ENCODE measurements at regions of chr4 and their contacts with region 1.

Region 1: GRCh38 chr4:109424093-109424841 is 9.3 kb upstream of the SEC24B start:
- DNase-seq: no peak
- H3K4me3 ChIP-seq: no peak overlapping the region
- H3K4me1 ChIP-seq: no peaks in the 10 kb centered on the region
- H3K27me3 ChIP-seq: no peaks in the 10 kb centered on the region

Region 2: DNA sequence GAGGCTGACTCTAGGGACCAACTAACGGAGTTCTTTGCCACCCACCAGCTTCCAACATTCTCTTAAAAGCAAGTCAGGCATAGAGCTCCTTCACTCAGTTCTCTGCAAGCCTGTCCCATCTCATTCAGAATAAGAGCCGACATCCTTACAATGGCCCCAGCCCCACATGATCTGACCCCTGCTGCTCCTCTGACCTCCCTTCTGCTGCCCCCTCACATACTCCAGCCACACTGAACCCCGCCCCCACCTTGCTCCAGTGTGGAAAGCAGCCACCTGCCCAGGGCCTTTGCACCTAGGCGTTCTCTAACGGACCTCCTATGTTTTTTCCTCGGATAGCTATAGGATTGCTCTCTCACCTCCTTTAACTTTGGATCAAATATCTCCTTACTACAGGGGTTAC is 518.3 kb before region 1 on chr4:
- in situ Hi-C with region 1: no loop called
- DNase-seq: no peak
- H3K4me3 ChIP-seq: no peak overlapping the region
- H3K4me1 ChIP-seq: peaks cover 10% of the 10 kb centered on the region
- H3K27me3 ChIP-seq: no peaks in the 10 kb centered on the region

Region 3: DNA sequence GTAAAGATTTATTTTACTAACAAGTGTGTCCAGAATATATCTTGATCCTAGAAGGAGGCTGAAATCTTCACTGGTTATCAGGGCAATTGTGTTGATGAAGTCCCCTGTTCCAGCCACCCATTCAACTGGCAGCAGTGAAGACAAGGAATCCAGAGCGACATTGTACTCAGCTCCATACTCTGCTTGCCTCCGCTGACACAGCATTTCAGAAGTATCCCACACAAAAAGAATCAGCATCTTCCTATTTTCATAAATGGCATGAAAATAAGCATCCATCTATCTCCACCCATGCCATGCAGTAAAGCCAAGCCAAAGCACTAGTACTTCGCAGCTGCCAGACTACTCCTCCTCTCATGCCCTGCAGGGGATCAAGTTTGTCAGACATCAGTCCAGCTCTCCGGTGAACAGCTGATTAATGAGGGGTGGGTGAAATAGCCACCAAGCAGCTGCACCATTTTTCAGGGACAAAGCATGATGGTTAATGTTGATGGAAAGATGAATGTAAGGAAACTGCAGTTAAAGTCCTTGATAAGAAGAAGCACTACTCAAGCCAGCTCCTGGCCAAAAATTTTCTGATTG is 175.9 kb before region 1 on chr4:
- in situ Hi-C with region 1: no loop called
- DNase-seq: no peak
- H3K4me3 ChIP-seq: no peak overlapping the region
- H3K4me1 ChIP-seq: no peaks in the 10 kb centered on the region
- H3K27me3 ChIP-seq: no peaks in the 10 kb centered on the region

Region 4: DNA sequence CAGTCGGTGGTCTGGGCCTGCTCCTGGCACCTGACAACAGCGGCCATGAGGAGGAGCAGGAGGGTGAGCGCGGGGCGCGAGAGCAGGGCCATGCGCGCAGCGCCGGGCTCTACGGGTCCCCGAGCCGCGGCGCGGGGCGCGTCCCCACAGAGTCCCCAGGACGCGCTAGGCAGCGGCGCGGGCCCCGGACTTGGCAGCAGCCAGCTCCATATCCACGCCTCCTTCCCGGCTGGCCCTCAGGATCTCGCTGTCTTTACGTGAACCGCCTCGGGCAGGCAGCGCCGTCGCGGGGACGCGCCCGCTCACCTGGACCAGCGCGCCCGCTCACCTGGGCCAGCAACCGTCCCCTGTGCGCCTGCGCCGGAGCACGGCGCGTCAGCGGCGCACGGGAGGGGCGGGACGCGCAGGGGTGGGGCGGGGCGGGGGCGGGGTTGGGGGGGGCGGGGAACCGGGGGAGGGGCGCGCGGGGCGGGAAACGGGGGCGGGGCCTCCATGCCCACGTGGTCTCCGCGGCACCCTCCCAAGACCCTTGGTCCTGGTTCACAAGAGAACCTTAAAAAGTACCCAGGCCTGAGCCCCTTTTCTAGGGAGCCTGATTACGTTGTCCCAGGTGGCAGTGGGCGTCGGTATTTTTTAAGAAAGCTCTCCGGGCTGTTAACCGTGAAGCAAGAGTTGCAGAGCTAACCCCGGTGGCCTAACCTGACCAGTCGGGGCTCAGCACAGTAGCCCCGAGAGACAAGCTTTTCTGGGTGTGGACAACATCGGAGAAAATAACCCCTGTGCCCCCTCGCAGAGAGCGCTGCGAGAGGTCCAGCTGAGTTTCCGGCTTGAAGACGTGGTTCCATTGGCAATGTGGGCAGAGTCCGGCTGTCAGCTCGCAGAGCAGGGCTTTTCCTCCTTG is 305.7 kb after region 1 on chr4 and contains the start of gene PLA2G12A:
- in situ Hi-C with region 1: no loop called
- DNase-seq: peak; percentile 41 to 69
- H3K4me3 ChIP-seq: peak within 1 kb of the TSS; percentile 73
- H3K4me1 ChIP-seq: peaks cover 16% of the 10 kb centered on the region
- H3K27me3 ChIP-seq: no peaks in the 10 kb centered on the region

Region 5: DNA sequence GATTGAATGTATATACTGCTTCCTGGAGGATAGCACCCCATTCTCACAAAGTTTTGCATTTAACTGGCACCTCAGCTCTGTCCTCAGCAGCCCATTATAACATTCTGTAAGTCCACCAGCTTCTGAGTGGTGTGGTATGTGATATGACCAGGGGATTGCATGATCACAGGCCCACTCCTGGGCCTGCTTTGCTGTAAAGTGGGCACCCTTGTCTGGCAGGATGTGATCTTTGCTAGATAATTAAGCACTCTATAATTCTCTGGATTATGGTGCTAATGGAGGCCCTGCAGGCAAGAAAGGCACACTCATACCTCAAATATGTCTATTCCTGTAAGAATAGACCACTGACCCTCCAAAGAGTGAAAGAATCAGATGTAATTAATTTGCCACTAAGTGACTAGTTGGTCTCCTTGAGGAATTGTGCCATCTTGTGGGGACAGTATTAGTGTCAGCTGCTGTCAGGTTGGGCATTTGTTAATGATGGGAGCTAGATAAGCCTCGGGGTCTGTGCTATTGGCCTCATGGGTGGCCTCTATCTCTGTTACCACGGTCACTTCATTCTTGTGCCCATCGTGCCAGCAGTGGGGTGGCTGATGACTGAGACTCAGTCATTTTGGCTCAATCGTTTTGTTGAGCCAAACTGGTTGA is 379.8 kb after region 1 on chr4:
- in situ Hi-C with region 1: loop called (anchors 10 kb)
- DNase-seq: peak; percentile 24 to 42
- H3K4me3 ChIP-seq: no peak overlapping the region
- H3K4me1 ChIP-seq: peaks cover 3% of the 10 kb centered on the region; the same call in 1 of the 2 replicates
- H3K27me3 ChIP-seq: no peaks in the 10 kb centered on the region

Region 6: DNA sequence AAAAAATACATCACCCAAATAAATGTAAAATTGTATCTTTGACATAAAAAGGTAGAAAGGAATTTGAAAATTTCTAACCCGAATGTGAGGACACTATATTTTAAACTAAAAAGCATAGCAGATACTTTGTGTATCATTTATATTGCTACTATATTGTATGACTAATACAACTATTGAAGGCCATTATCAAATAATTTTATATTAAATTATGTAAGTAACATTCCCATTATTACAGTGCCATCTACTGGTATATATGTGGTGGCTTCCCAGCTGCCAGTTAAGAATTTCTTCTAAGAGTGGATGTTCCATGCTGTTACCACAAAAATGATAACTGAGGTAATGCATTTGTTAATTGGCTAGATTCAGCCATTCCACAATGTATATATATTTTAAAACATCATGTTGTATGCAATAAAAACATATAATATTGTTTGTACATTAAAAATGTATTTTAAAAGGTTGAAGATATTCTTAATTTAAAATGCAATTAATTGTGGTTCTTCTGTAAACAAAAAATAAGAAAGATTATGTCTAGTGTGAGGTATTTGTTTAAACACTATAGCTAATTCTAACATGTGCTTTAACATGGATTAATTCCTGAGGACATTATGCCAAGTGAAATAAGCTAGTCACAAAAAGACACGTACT is 553.7 kb after region 1 on chr4:
- in situ Hi-C with region 1: loop called (anchors 5 kb)
- DNase-seq: peak; percentile 27 to 59
- H3K4me3 ChIP-seq: no peak overlapping the region
- H3K4me1 ChIP-seq: peaks cover 30% of the 10 kb centered on the region
- H3K27me3 ChIP-seq: no peaks in the 10 kb centered on the region

Measured in HAP-1 (cell line).